Activated B cell treated with CpG ODN at 0.5 μM for 24 hours (primary cell): ENCODE measurements at regions of chr1 and their contacts with region 1.

Region 1: GRCh38 chr1:38990738-38991639 is at the start of gene AKIRIN1:
- DNase-seq: peak; percentile 100
- ATAC-seq: peak; percentile 92
- H3K4me3 Mint-ChIP-seq: peak within 1 kb of the TSS; percentile 91
- H3K27ac Mint-ChIP-seq: peak within 1 kb of the TSS; percentile 92
- H3K4me1 Mint-ChIP-seq: peaks cover 30% of the 10 kb centered on the region
- H3K27me3 Mint-ChIP-seq: no peaks in the 10 kb centered on the region
- CTCF ChIP-seq: no peak
- total RNA-seq, gene AKIRIN1: 53.3 and 57.3 TPM in 2 replicates

Region 2: DNA sequence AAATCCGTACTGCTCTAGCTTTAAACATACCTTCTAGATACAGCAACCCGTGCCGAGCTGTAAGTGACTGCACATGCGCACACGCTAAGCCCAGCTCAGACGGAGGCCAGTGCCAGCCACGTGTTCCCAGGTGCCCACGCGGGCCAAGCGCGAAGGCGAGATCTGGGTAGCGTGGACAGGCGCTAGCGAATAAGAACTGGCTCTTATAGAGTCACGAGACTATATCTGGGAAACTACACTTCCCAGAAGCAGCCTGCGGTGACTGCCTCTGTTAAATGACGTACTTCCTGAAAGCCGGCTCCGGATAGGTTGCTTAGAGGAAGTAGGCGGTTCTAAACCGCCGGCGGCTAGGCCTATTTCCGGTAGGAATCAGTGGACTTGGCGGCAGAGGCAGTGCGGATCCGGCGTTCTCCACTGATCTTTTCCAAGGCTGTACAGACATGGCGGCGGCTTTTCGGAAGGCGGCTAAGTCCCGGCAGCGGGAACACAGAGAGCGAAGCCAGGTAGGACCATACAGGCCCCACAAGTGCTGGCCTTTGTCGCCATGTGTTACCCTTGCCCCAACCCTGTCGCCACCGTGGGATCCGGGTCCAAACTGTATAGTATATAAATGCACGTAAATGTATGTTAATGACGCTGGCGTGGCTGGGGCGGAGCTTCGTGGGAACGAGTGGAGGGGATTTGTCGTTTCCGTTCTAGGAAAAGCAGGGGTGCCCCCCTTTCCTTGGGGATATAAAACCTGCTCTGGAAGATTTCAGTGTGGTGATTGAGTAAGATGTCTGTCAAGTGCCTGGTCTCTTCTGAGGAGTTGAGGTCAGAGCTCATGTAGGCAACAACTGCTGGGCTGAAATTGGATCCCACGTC is 978.4 kb before region 1 on chr1 and contains the start of gene UTP11:
- CTCF ChIA-PET with region 1: no interaction called
- POLR2A ChIA-PET with region 1: no interaction called
- intact Hi-C with region 1: loop called (anchors 1 kb)
- DNase-seq: peak; percentile 74
- ATAC-seq: peak; percentile 97
- H3K4me3 Mint-ChIP-seq: peak within 1 kb of the TSS; percentile 100
- H3K27ac Mint-ChIP-seq: peak within 1 kb of the TSS; percentile 94
- H3K4me1 Mint-ChIP-seq: peaks cover 27% of the 10 kb centered on the region
- H3K27me3 Mint-ChIP-seq: no peaks in the 10 kb centered on the region
- CTCF ChIP-seq: no peak
- total RNA-seq, gene UTP11: 26.1 and 28.6 TPM in 2 replicates

Region 3: DNA sequence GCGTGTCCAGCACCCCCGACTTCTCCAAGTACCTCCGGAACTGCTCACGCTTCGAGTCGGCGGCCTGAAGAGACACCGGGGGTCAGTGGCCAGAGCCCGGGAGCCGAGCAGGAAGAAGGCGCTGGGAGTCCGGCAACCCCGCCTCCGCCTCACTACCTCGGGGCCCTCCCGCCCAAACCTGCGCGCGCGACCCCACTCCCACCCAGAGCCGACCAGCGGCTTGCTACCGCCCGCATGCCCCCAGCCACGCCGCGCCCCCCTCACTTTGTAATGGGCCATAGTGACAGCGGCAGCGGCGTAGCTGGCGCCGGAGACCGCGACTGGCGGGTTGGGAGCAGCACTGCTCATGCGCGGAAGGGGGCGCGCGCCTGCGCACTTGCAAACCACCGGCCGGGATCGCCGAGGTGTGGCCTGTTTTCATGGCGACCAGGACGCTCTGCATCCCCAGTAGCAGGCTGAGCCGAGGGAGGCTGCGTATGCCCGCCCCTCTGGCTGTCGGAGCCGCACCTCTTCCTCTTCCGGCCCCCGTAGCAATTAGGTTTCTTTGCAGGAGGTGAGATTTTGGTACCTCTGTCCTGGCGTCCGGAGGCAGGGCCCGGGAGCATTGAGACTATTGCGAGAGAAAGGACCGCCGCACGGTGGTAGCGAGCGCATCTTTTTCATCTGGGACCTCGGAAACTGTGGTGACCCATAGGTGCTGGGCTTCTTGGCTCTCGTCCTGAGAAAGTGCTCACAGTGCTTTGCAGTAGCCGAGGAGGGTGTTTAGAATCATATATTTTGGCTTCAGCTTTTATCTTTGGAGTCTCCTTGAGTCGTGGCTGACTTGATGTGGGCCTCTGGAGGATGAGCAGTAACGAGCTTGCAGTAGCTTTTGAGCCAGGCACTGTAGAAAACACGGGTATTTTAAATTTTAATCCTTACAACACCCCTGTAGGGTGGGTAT is 117.7 kb before region 1 on chr1 and contains the start of gene MYCBP:
- CTCF ChIA-PET with region 1: no interaction called
- POLR2A ChIA-PET with region 1: interaction called, 3 read pairs
- intact Hi-C with region 1: loop called (anchors 1 kb)
- DNase-seq: peak; percentile 97
- ATAC-seq: peak; percentile 99
- H3K4me3 Mint-ChIP-seq: peak within 1 kb of the TSS; percentile 92
- H3K27ac Mint-ChIP-seq: peak within 1 kb of the TSS; percentile 83
- H3K4me1 Mint-ChIP-seq: peaks cover 23% of the 10 kb centered on the region
- H3K27me3 Mint-ChIP-seq: no peaks in the 10 kb centered on the region
- CTCF ChIP-seq: no peak
- total RNA-seq, gene MYCBP: 18.6 and 19.2 TPM in 2 replicates

Region 4: GRCh38 chr1:39026051-39026865 is 35.3 kb after region 1 on chr1 and contains the start of gene NDUFS5:
- CTCF ChIA-PET with region 1: no interaction called
- POLR2A ChIA-PET with region 1: interaction called, 10 read pairs
- intact Hi-C with region 1: loop called (anchors 1 kb)
- DNase-seq: peak; percentile 63
- ATAC-seq: peak; percentile 91
- H3K4me3 Mint-ChIP-seq: peak within 1 kb of the TSS; percentile 98
- H3K27ac Mint-ChIP-seq: peak within 1 kb of the TSS; percentile 98
- H3K4me1 Mint-ChIP-seq: peaks cover 16% of the 10 kb centered on the region
- H3K27me3 Mint-ChIP-seq: no peaks in the 10 kb centered on the region
- CTCF ChIP-seq: no peak
- total RNA-seq, gene NDUFS5: 79.3 and 81.3 TPM in 2 replicates